ENCODE measurements at regions of chr17 and their contacts with region 1.

Region 1: GRCh38 chr17:42067351-42068091 is 17.1 kb upstream of the C17orf113 start:
- DNase-seq: peak; percentile 79
- ATAC-seq: peak; percentile 71
- H3K4me3 ChIP-seq: no peak overlapping the region
- H3K4me3 Mint-ChIP-seq: no peak overlapping the region
- H3K27ac ChIP-seq: no peak overlapping the region
- H3K27ac Mint-ChIP-seq: no peak overlapping the region
- H3K4me1 ChIP-seq: peaks cover 29 to 30% of the 10 kb centered on the region in 2 donors
- H3K4me1 Mint-ChIP-seq: peaks cover 24% of the 10 kb centered on the region
- H3K27me3 ChIP-seq: peaks cover 0 to 18% (median 7%) of the 10 kb centered on the region in 4 experiments
- H3K27me3 Mint-ChIP-seq: peaks cover 3% of the 10 kb centered on the region
- CTCF ChIP-seq: peak; percentile 91

Region 2: DNA sequence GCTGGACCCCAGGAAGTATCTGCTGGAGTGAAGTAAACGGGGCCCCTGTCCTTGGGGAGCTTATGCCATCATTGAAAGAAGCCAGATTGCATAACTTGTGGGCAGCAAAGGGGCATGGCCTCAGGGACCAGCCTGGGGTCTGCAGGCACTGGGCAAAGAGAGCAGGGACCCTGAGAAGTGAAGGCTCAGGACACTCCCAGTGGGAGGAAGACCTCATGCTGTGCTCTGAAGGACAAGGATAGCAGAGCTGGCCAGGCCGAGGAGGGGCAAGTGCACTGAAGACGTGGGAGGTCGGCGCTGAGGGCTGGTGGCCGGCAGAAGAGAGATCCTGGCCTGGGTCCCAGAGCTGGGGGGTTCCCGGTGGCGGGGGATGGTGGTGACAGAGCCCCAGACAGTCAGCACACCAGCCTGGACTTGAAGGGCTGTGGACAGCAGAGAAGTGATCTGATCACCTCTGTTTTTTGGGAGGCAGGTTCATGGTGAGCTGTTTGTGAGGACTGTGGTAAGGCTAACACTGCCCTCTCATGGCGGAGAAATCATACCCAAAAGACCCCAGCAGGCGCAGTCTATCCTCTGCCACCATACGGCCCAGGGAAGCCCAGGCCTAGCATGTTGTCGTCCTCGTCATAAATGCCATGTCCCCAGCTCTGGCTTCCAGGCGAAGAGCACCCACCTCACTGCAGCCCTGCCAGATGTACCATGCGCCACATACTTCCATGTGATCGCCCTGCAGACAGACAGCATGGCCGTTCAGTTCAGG is 108.0 kb before region 1 on chr17:
- CTCF ChIA-PET with region 1: interaction called, 51 read pairs
- POLR2A ChIA-PET with region 1: no interaction called
- intact Hi-C with region 1: loop called (anchors 1 kb)
- DNase-seq: no peak
- ATAC-seq: no peak
- H3K4me3 ChIP-seq: no peak overlapping the region
- H3K4me3 Mint-ChIP-seq: no peak overlapping the region
- H3K27ac ChIP-seq: no peak overlapping the region
- H3K27ac Mint-ChIP-seq: no peak overlapping the region
- H3K4me1 ChIP-seq: peaks cover 0 to 6% of the 10 kb centered on the region in 2 donors
- H3K4me1 Mint-ChIP-seq: no peaks in the 10 kb centered on the region
- H3K27me3 ChIP-seq: no peaks in the 10 kb centered on the region
- H3K27me3 Mint-ChIP-seq: no peaks in the 10 kb centered on the region
- CTCF ChIP-seq: no peak

Region 3: GRCh38 chr17:42027961-42028790 is 39.3 kb before region 1 on chr17:
- CTCF ChIA-PET with region 1: interaction called, 18 read pairs
- POLR2A ChIA-PET with region 1: no interaction called
- intact Hi-C with region 1: no loop called
- DNase-seq: no peak
- ATAC-seq: no peak
- H3K4me3 ChIP-seq: no peak overlapping the region
- H3K4me3 Mint-ChIP-seq: no peak overlapping the region
- H3K27ac ChIP-seq: no peak overlapping the region
- H3K27ac Mint-ChIP-seq: no peak overlapping the region
- H3K4me1 ChIP-seq: peaks cover 11 to 14% of the 10 kb centered on the region in 2 donors
- H3K4me1 Mint-ChIP-seq: peaks cover 13% of the 10 kb centered on the region
- H3K27me3 ChIP-seq: peaks cover 0 to 3% (median 0%) of the 10 kb centered on the region in 4 experiments
- H3K27me3 Mint-ChIP-seq: no peaks in the 10 kb centered on the region
- CTCF ChIP-seq: no peak

Region 4: GRCh38 chr17:42101513-42102319 is 34.2 kb after region 1 on chr17:
- CTCF ChIA-PET with region 1: interaction called, 17 read pairs
- POLR2A ChIA-PET with region 1: no interaction called
- intact Hi-C with region 1: no loop called
- DNase-seq: peak; percentile 59
- ATAC-seq: peak; percentile 59
- H3K4me3 ChIP-seq: no peak overlapping the region
- H3K4me3 Mint-ChIP-seq: no peak overlapping the region
- H3K27ac ChIP-seq: no peak overlapping the region
- H3K27ac Mint-ChIP-seq: no peak overlapping the region
- H3K4me1 ChIP-seq: peaks cover 11 to 17% of the 10 kb centered on the region in 2 donors
- H3K4me1 Mint-ChIP-seq: peaks cover 9% of the 10 kb centered on the region
- H3K27me3 ChIP-seq: peaks cover 0 to 15% (median 9%) of the 10 kb centered on the region in 4 experiments
- H3K27me3 Mint-ChIP-seq: peaks cover 3% of the 10 kb centered on the region
- CTCF ChIP-seq: peak; percentile 78

Region 5: DNA sequence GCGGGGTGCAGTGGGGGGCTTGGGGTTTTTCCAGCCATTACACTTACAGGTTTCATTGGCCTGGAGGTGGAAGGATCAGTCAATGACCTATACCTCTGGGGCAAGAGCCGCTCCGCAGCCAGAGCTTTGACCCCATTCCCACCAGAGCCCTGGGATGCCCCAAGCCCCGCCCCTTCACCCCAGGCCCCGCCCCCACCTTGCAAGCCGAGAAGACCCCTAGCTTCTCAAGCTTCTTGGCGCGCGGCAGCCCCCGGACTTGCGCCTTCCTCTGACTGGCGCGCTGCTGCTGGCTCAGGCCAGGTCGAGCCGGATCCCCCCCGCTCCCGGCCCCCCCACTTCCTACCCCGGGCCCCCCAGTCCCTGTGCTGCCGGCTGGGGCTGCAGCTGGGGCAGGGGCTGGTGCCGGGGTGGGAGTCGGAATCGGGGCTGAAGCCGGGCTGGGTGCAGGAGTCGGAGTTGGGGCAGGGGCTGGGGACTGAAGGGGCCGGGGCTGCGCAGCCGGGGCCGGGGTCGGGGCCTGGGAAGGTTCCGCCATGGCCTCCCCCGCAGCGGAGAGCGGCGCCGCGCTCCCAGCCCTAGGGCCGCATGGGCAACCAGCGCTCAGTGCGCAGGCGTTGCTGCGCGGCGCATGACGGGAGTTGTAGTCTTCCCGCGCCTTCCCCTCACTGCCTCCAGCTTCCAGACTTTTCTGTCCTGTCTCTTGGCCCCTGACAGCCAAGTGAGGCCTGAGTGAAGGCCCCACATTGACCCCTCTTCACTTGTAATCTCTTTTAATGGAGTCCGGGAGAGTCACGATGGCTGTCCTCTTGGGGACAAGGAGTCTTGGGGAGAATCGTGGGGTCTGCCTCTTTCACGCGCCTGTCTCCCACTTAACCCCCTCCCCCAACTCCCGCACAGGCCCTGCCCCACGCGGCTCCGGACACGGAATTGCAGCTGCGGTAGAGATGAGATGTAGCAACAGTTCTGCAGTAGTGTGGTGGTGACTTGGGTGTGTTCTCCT is 53.5 kb after region 1 on chr17 and contains the start of gene KAT2A:
- CTCF ChIA-PET with region 1: interaction called, 89 read pairs
- POLR2A ChIA-PET with region 1: no interaction called
- intact Hi-C with region 1: loop called (anchors 1 kb)
- DNase-seq: peak; percentile 82
- ATAC-seq: peak; percentile 89
- H3K4me3 ChIP-seq: peak within 1 kb of the TSS in 4 of 5 experiments; percentile 40 to 79 (median 58)
- H3K4me3 Mint-ChIP-seq: peak within 1 kb of the TSS; percentile 72
- H3K27ac ChIP-seq: no peak within 1 kb of the TSS
- H3K27ac Mint-ChIP-seq: peak within 1 kb of the TSS; percentile 59
- H3K4me1 ChIP-seq: peaks cover 14 to 26% of the 10 kb centered on the region in 2 donors
- H3K4me1 Mint-ChIP-seq: peaks cover 28% of the 10 kb centered on the region
- H3K27me3 ChIP-seq: no peaks in the 10 kb centered on the region
- H3K27me3 Mint-ChIP-seq: no peaks in the 10 kb centered on the region
- CTCF ChIP-seq: no peak
- total RNA-seq, gene KAT2A: 61.6 and 66.3 TPM in 2 replicates

Region 6: GRCh38 chr17:42405963-42406495 is 338.5 kb after region 1 on chr17:
- CTCF ChIA-PET with region 1: no interaction called
- POLR2A ChIA-PET with region 1: no interaction called
- intact Hi-C with region 1: no loop called
- DNase-seq: peak; percentile 86
- ATAC-seq: peak; percentile 79
- H3K4me3 ChIP-seq: no peak overlapping the region
- H3K4me3 Mint-ChIP-seq: no peak overlapping the region
- H3K27ac ChIP-seq: no peak overlapping the region
- H3K27ac Mint-ChIP-seq: peak overlapping the region; percentile 27
- H3K4me1 ChIP-seq: peaks cover 2 to 16% of the 10 kb centered on the region in 2 donors
- H3K4me1 Mint-ChIP-seq: peaks cover 13% of the 10 kb centered on the region
- H3K27me3 ChIP-seq: peaks cover 0 to 10% (median 2%) of the 10 kb centered on the region in 4 experiments
- H3K27me3 Mint-ChIP-seq: peaks cover 5% of the 10 kb centered on the region
- CTCF ChIP-seq: peak; percentile 89